ENCODE measurements at regions of chr2 and their contacts with region 1.

Region 1: GRCh38 chr2:226791487-226792081 is 8.0 kb downstream of the IRS1 start:
- DNase-seq: peak; percentile 75
- ATAC-seq: peak; percentile 85
- H3K4me3 ChIP-seq: peak overlapping the region; percentile 78
- H3K27ac ChIP-seq: peak overlapping the region; percentile 97
- H3K4me1 ChIP-seq: peaks cover 8% of the 10 kb centered on the region
- H3K27me3 ChIP-seq: no peaks in the 10 kb centered on the region
- CTCF ChIP-seq: peak; percentile 21; the same call in 1 of the 2 replicates
- POLR2A ChIP-seq: 0 out of 2 replicates have a peak, but pooled peaks have one; percentile 29
- RAD21 ChIP-seq: no peak

Region 2: GRCh38 chr2:225889446-225889850 is 902.1 kb before region 1 on chr2:
- CTCF ChIA-PET with region 1: interaction called, 5 read pairs
- POLR2A ChIA-PET with region 1: no interaction called
- dilution Hi-C with region 1: no loop called
- in situ Hi-C with region 1: loop called (anchors 5 kb)
- intact Hi-C with region 1: loop called (anchors 2 kb)
- DNase-seq: peak; percentile 94
- ATAC-seq: peak; percentile 81
- H3K4me3 ChIP-seq: no peak overlapping the region
- H3K27ac ChIP-seq: peak overlapping the region; percentile 40; the same call in 1 of the 2 replicates
- H3K4me1 ChIP-seq: peaks cover 6% of the 10 kb centered on the region
- H3K27me3 ChIP-seq: no peaks in the 10 kb centered on the region
- CTCF ChIP-seq: peak; percentile 85
- POLR2A ChIP-seq: no peak
- RAD21 ChIP-seq: peak; percentile 82

Region 3: DNA sequence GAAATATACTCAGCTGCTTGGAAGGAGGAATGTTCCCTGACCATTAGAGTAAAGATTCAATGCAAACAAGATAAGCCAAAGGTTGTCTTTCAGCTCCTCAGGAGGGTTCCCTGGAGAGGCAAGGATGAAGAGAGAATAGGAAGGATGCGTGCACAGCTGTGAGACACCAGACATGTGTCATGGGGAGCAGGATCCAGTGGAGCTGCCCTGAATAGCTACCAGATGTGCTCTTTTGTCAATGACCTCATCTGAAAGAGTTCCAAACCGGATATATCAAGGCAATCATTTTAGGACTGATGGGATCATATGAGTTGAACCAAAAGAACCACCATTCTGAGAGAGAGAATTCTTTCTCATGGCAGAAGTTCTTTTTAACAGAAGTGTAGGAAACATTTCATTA is 482.6 kb before region 1 on chr2:
- CTCF ChIA-PET with region 1: no interaction called
- POLR2A ChIA-PET with region 1: no interaction called
- dilution Hi-C with region 1: no loop called
- in situ Hi-C with region 1: no loop called
- intact Hi-C with region 1: loop called (anchors 10 kb)
- DNase-seq: peak; percentile 76
- ATAC-seq: no peak
- H3K4me3 ChIP-seq: no peak overlapping the region
- H3K27ac ChIP-seq: peak overlapping the region; percentile 55; the same call in 1 of the 2 replicates
- H3K4me1 ChIP-seq: peaks cover 5% of the 10 kb centered on the region; the same call in 1 of the 2 replicates
- H3K27me3 ChIP-seq: no peaks in the 10 kb centered on the region
- CTCF ChIP-seq: no peak
- POLR2A ChIP-seq: no peak
- RAD21 ChIP-seq: no peak

Region 4: DNA sequence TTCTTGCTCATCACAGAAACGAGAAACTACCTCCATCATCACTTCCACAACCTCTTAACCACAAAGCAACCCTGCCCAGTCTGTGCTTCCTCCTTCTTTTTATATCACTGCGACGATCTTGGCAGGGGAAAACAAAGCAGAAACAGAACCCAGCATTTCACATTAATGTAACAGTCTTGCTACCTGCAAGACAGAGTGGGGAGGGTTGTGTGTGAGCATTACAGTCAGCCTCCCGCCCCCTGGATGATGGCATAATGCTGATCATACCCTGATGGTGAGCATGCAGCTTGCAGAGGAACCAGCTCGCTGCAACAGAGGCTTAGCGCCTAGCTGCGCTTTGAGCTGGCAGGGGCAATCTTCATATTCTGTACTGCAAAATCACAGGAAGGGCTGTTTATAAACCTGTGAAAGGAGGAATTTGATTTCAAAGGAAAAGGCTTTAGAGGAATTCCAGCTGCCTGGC is 368.1 kb before region 1 on chr2:
- CTCF ChIA-PET with region 1: interaction called, 4 read pairs
- POLR2A ChIA-PET with region 1: no interaction called
- dilution Hi-C with region 1: no loop called
- in situ Hi-C with region 1: loop called (anchors 5 kb)
- intact Hi-C with region 1: loop called (anchors 2 kb)
- DNase-seq: peak; percentile 51
- ATAC-seq: no peak
- H3K4me3 ChIP-seq: no peak overlapping the region
- H3K27ac ChIP-seq: peak overlapping the region; percentile 80
- H3K4me1 ChIP-seq: peaks cover 24% of the 10 kb centered on the region
- H3K27me3 ChIP-seq: no peaks in the 10 kb centered on the region
- CTCF ChIP-seq: no peak
- POLR2A ChIP-seq: no peak
- RAD21 ChIP-seq: no peak

Region 5: GRCh38 chr2:226514939-226515338 is 276.6 kb before region 1 on chr2:
- CTCF ChIA-PET with region 1: no interaction called
- POLR2A ChIA-PET with region 1: no interaction called
- dilution Hi-C with region 1: no loop called
- in situ Hi-C with region 1: no loop called
- intact Hi-C with region 1: loop called (anchors 5 kb)
- DNase-seq: peak; percentile 40
- ATAC-seq: peak; percentile 52
- H3K4me3 ChIP-seq: no peak overlapping the region
- H3K27ac ChIP-seq: peak overlapping the region; percentile 24; the same call in 1 of the 2 replicates
- H3K4me1 ChIP-seq: peaks cover 4% of the 10 kb centered on the region
- H3K27me3 ChIP-seq: no peaks in the 10 kb centered on the region
- CTCF ChIP-seq: no peak
- POLR2A ChIP-seq: no peak
- RAD21 ChIP-seq: no peak

Region 6: DNA sequence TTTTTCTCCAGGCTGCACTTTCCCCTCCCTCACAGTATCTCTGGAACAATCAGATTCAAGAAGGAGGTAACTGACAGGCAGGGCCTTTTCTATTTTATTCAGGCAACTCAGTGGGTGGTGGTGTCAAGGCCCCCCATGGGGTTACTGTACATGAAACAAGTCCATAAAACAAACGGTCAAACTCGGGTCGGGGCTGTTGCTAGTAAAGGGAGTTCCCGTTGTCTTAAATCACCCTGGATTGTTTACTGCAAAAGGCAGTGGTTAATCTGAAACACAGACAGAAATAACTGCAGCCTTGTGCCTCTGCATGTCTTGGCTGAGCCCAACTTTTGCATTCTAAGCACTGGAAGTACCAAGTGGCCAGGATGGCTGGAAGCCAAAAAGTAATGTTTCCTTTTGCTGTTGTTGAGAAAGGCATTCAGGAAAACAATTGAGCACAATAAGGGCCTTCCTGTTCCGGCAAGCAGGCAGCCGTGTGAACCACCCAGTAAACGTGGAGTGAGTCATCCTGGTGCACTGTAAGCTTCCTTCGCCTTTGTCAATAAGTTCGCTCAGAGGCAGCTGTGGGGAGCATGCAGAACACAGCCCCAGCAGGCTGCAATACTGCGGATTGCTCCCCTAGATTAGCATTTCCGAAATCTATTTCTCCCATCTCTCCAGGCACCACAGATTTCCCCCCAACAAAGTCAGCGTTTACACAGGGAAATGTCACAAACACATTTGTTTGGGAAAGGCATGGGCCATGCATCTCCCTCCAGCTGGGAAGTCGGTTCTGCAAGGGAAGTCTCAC is 141.5 kb before region 1 on chr2:
- CTCF ChIA-PET with region 1: interaction called, 3 read pairs
- POLR2A ChIA-PET with region 1: no interaction called
- dilution Hi-C with region 1: no loop called
- in situ Hi-C with region 1: loop called (anchors 10 kb)
- intact Hi-C with region 1: loop called (anchors 2 kb)
- DNase-seq: peak; percentile 98
- ATAC-seq: peak; percentile 91
- H3K4me3 ChIP-seq: no peak overlapping the region
- H3K27ac ChIP-seq: peak overlapping the region; percentile 66
- H3K4me1 ChIP-seq: peaks cover 23% of the 10 kb centered on the region
- H3K27me3 ChIP-seq: no peaks in the 10 kb centered on the region
- CTCF ChIP-seq: no peak
- POLR2A ChIP-seq: peak; percentile 42; the same call in 1 of the 2 replicates
- RAD21 ChIP-seq: peak; percentile 16

Region 7: GRCh38 chr2:226758921-226759640 is 32.5 kb before region 1 on chr2:
- CTCF ChIA-PET with region 1: interaction called, 3 read pairs
- POLR2A ChIA-PET with region 1: interaction called, 4 read pairs
- dilution Hi-C with region 1: no loop called
- in situ Hi-C with region 1: no loop called
- intact Hi-C with region 1: loop called (anchors 5 kb)
- DNase-seq: peak; percentile 87
- ATAC-seq: peak; percentile 24
- H3K4me3 ChIP-seq: no peak overlapping the region
- H3K27ac ChIP-seq: peak overlapping the region; percentile 96
- H3K4me1 ChIP-seq: peaks cover 28% of the 10 kb centered on the region
- H3K27me3 ChIP-seq: no peaks in the 10 kb centered on the region
- CTCF ChIP-seq: no peak
- POLR2A ChIP-seq: no peak
- RAD21 ChIP-seq: no peak

Measured in IMR-90 (cell line).